Right cardiac atrium (tissue), 5 donors: ENCODE measurements at regions of chr18 and their contacts with region 1.

Region 1: GRCh38 chr18:39724652-39725051 is 2159.1 kb upstream of the CELF4 start:
- DNase-seq: no peak
- ATAC-seq: no peak
- H3K4me3 ChIP-seq: no peak overlapping the region
- H3K27ac ChIP-seq: no peak overlapping the region
- H3K4me1 ChIP-seq: no peaks in the 10 kb centered on the region
- H3K27me3 ChIP-seq: no peaks in the 10 kb centered on the region

Region 2: DNA sequence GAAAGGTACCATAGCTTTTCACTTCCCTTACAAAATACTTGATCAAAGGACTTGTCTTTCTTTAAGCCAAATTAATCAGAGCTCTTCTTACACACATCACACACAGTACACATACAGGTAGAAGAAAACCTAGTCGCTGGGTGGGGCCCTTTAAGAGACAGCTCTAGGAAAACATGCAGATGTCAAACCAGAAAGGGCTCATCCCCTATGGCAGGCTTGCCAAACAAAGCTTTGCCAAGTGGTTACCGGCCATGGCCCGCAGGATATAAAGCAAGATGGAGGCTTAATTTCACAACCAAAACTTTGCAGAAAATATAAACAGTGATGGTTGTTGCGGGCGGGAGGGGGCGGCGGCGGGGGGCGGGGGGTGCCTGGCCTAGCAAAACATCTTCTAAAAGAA is 74.4 kb after region 1 on chr18:
- intact Hi-C with region 1: loop called in 1 of 4 experiments (anchors 10 kb)
- DNase-seq: peak in 1 of 3 donors; percentile 19
- ATAC-seq: no peak
- H3K4me3 ChIP-seq: no peak overlapping the region
- H3K27ac ChIP-seq: no peak overlapping the region
- H3K4me1 ChIP-seq: no peaks in the 10 kb centered on the region
- H3K27me3 ChIP-seq: no peaks in the 10 kb centered on the region